PC-9 (cell line): ENCODE measurements at regions of chr3 and their contacts with region 1.

Region 1: GRCh38 chr3:161475901-161476300 is 20.7 kb upstream of the OTOL1 start:
- DNase-seq: peak; percentile 45 to 58
- H3K4me3 ChIP-seq: no peak overlapping the region
- H3K27ac ChIP-seq: no peak overlapping the region
- H3K4me1 ChIP-seq: peaks cover 8% of the 10 kb centered on the region; the same call in 1 of the 2 replicates
- H3K27me3 ChIP-seq: no peaks in the 10 kb centered on the region
- CTCF ChIP-seq: no peak

Region 2: GRCh38 chr3:161395115-161396012 is 80.5 kb before region 1 on chr3:
- CTCF ChIA-PET with region 1: no interaction called
- POLR2A ChIA-PET with region 1: no interaction called
- intact Hi-C with region 1: no loop called
- DNase-seq: no peak
- H3K4me3 ChIP-seq: no peak overlapping the region
- H3K27ac ChIP-seq: no peak overlapping the region
- H3K4me1 ChIP-seq: no peaks in the 10 kb centered on the region
- H3K27me3 ChIP-seq: no peaks in the 10 kb centered on the region
- CTCF ChIP-seq: no peak

Region 3: DNA sequence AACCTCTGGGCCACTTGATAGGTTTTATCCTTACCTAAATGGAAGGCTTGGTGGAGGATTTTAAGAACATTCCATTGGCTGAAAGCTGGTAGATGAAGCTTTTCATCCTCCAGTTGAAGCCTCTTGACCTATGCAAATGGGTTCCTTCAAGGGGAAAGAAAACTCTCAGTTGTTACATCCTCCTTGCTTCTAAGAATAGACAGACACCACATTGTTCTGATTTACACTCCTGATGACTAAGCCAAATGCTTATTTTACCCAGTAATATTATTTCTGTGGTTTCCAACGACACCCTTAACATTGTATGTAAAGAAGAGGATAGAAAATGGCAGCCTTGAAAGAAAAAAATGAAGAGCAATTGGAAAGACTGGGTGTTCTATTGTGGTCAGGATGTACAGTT is 501.2 kb after region 1 on chr3:
- CTCF ChIA-PET with region 1: interaction called, 26 read pairs
- POLR2A ChIA-PET with region 1: no interaction called
- intact Hi-C with region 1: no loop called
- DNase-seq: no peak
- H3K4me3 ChIP-seq: no peak overlapping the region
- H3K27ac ChIP-seq: no peak overlapping the region
- H3K4me1 ChIP-seq: no peaks in the 10 kb centered on the region
- H3K27me3 ChIP-seq: no peaks in the 10 kb centered on the region
- CTCF ChIP-seq: no peak